ENCODE measurements at regions of chr4 and their contacts with region 1.

Region 1: DNA sequence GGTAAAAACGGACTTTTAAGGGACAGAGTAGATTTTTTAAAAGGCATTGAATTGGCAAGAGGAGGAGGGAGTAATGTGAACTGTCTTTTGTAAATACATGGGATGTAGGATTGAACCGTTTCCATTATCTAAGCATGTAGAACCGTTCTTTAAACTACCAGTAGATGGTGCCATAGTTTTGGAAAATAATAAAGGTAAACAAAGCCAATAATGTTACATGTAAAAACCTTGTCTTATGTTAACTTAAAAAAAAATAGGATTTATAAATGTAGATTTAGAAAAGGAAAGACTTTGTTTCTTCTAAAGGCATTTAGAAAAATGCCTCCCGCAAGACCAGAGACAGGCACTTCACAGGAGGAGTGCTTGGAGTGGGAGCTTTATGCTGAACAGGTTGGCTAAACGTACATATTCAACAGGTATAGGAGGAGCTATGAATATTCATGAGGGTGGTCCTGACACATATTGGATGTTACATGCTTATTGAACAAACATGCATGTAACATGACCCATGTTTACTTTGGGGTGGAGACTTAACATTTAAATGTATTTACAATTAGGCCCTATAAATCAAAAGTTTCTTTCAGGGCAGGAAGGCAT is 45.5 kb upstream of the FAM241A start:
- DNase-seq: peak; percentile 71
- H3K4me3 ChIP-seq: no peak overlapping the region
- H3K27ac ChIP-seq: no peak overlapping the region
- H3K4me1 ChIP-seq: no peaks in the 10 kb centered on the region
- H3K27me3 ChIP-seq: no peaks in the 10 kb centered on the region
- CTCF ChIP-seq: peak; percentile 72

Region 2: GRCh38 chr4:111813555-111814140 is 286.2 kb before region 1 on chr4:
- CTCF ChIA-PET with region 1: no interaction called
- POLR2A ChIA-PET with region 1: no interaction called
- intact Hi-C with region 1: no loop called
- DNase-seq: no peak
- H3K4me3 ChIP-seq: no peak overlapping the region
- H3K27ac ChIP-seq: no peak overlapping the region
- H3K4me1 ChIP-seq: no peaks in the 10 kb centered on the region
- H3K27me3 ChIP-seq: no peaks in the 10 kb centered on the region
- CTCF ChIP-seq: no peak

Region 3: GRCh38 chr4:112189754-112190153 is 90.0 kb after region 1 on chr4:
- CTCF ChIA-PET with region 1: interaction called, 7 read pairs
- POLR2A ChIA-PET with region 1: no interaction called
- intact Hi-C with region 1: loop called (anchors 5 kb)
- DNase-seq: peak; percentile 18
- H3K4me3 ChIP-seq: no peak overlapping the region
- H3K27ac ChIP-seq: no peak overlapping the region
- H3K4me1 ChIP-seq: no peaks in the 10 kb centered on the region
- H3K27me3 ChIP-seq: no peaks in the 10 kb centered on the region
- CTCF ChIP-seq: peak; percentile 41; the same call in 1 of the 2 replicates

Region 4: GRCh38 chr4:112231779-112232713 is 132.2 kb after region 1 on chr4 and contains the start of gene AP1AR:
- CTCF ChIA-PET with region 1: interaction called, 5 read pairs
- POLR2A ChIA-PET with region 1: no interaction called
- intact Hi-C with region 1: loop called (anchors 2 kb)
- DNase-seq: peak; percentile 91
- H3K4me3 ChIP-seq: peak within 1 kb of the TSS; percentile 96
- H3K27ac ChIP-seq: peak within 1 kb of the TSS; percentile 98
- H3K4me1 ChIP-seq: peaks cover 11% of the 10 kb centered on the region
- H3K27me3 ChIP-seq: no peaks in the 10 kb centered on the region
- CTCF ChIP-seq: peak; percentile 44; the same call in 1 of the 2 replicates
- total RNA-seq, gene AP1AR: 24.9 and 30.0 TPM in 2 replicates

Region 5: GRCh38 chr4:112327965-112328733 is 228.3 kb after region 1 on chr4:
- CTCF ChIA-PET with region 1: no interaction called
- POLR2A ChIA-PET with region 1: no interaction called
- intact Hi-C with region 1: loop called (anchors 5 kb)
- DNase-seq: peak; percentile 73
- H3K4me3 ChIP-seq: no peak overlapping the region
- H3K27ac ChIP-seq: no peak overlapping the region
- H3K4me1 ChIP-seq: no peaks in the 10 kb centered on the region
- H3K27me3 ChIP-seq: no peaks in the 10 kb centered on the region
- CTCF ChIP-seq: peak; percentile 61

Region 6: DNA sequence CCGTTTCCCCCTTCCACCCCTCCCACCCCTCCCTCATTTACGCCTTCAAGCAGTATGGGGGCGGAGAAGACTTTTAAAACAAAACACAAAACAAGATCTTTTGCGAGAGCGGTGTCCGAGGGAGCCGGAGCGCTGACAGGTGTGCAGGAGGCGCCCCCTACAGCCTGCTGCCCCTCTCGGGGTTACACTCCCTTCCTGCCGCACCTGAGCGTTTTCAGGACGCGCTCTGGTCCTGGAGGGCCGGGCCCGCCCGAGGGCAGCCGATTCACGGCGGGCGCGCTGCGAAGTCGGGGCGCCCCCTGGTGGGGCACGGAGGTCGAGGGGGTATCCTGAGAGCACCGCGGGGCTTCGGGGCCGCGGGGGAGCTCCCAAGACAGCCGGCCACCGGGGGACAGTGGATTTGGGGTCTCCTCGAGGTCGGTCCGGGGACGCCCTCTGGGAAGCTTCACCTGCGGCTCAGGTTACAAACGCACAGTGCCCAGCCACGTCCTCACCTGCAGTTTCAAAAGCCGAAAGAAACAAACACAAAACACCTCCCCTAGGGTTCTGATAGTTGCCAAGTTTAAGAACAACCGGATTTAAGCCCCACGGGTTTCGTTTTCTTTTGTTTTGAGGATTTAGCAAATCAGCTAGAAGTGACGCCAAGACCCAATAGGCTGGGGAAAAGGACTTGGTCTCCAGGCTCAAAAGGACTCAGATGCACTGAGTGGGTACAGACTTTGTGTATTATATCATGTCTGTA is 424.1 kb after region 1 on chr4:
- CTCF ChIA-PET with region 1: no interaction called
- POLR2A ChIA-PET with region 1: no interaction called
- intact Hi-C with region 1: loop called (anchors 5 kb)
- DNase-seq: peak; percentile 75
- H3K4me3 ChIP-seq: peak overlapping the region; percentile 50
- H3K27ac ChIP-seq: no peak overlapping the region
- H3K4me1 ChIP-seq: peaks cover 6% of the 10 kb centered on the region
- H3K27me3 ChIP-seq: peaks cover 39% of the 10 kb centered on the region
- CTCF ChIP-seq: peak; percentile 93

Region 7: GRCh38 chr4:112604589-112604988 is 504.8 kb after region 1 on chr4:
- CTCF ChIA-PET with region 1: interaction called, 4 read pairs
- POLR2A ChIA-PET with region 1: no interaction called
- intact Hi-C with region 1: loop called (anchors 10 kb)
- DNase-seq: peak; percentile 66
- H3K4me3 ChIP-seq: no peak overlapping the region
- H3K27ac ChIP-seq: no peak overlapping the region
- H3K4me1 ChIP-seq: no peaks in the 10 kb centered on the region
- H3K27me3 ChIP-seq: no peaks in the 10 kb centered on the region
- CTCF ChIP-seq: peak; percentile 70